Tibial artery (tissue), 4 donors: ENCODE measurements at regions of chr1 and their contacts with region 1.

Region 1: GRCh38 chr1:95111014-95111413 is 6.1 kb upstream of the TLCD4 start:
- DNase-seq: no peak
- H3K4me3 ChIP-seq: no peak overlapping the region
- H3K27ac ChIP-seq: no peak overlapping the region
- H3K4me1 ChIP-seq: no peaks in the 10 kb centered on the region
- H3K27me3 ChIP-seq: no peaks in the 10 kb centered on the region
- CTCF ChIP-seq: no peak

Region 2: GRCh38 chr1:95072532-95073419 is 38.2 kb before region 1 on chr1 and contains the start of gene ALG14:
- intact Hi-C with region 1: loop called (anchors 2 kb)
- DNase-seq: peak; percentile 93 to 97
- H3K4me3 ChIP-seq: peak within 1 kb of the TSS; percentile 60 to 70
- H3K27ac ChIP-seq: peak within 1 kb of the TSS; percentile 86 to 88
- H3K4me1 ChIP-seq: peaks cover 0 to 8% (median 0%) of the 10 kb centered on the region in 4 donors
- H3K27me3 ChIP-seq: no peaks in the 10 kb centered on the region
- CTCF ChIP-seq: no peak

Region 3: GRCh38 chr1:95584315-95584714 is 473.3 kb after region 1 on chr1:
- intact Hi-C with region 1: no loop called
- DNase-seq: no peak
- H3K4me3 ChIP-seq: no peak overlapping the region
- H3K27ac ChIP-seq: no peak overlapping the region
- H3K4me1 ChIP-seq: no peaks in the 10 kb centered on the region
- H3K27me3 ChIP-seq: no peaks in the 10 kb centered on the region
- CTCF ChIP-seq: no peak